IMR-90 (cell line): ENCODE measurements at regions of chr19 and their contacts with region 1.

Region 1: GRCh38 chr19:55624109-55625003 is at the start of gene ZNF784:
- DNase-seq: peak; percentile 90
- ATAC-seq: peak; percentile 93
- H3K4me3 ChIP-seq: peak within 1 kb of the TSS; percentile 83
- H3K27ac ChIP-seq: peak within 1 kb of the TSS; percentile 99
- H3K4me1 ChIP-seq: peaks cover 7% of the 10 kb centered on the region
- H3K27me3 ChIP-seq: no peaks in the 10 kb centered on the region
- CTCF ChIP-seq: no peak
- POLR2A ChIP-seq: peak; percentile 85
- RAD21 ChIP-seq: no peak
- total RNA-seq, gene ZNF784: 2.5 TPM in 2 replicates

Region 2: DNA sequence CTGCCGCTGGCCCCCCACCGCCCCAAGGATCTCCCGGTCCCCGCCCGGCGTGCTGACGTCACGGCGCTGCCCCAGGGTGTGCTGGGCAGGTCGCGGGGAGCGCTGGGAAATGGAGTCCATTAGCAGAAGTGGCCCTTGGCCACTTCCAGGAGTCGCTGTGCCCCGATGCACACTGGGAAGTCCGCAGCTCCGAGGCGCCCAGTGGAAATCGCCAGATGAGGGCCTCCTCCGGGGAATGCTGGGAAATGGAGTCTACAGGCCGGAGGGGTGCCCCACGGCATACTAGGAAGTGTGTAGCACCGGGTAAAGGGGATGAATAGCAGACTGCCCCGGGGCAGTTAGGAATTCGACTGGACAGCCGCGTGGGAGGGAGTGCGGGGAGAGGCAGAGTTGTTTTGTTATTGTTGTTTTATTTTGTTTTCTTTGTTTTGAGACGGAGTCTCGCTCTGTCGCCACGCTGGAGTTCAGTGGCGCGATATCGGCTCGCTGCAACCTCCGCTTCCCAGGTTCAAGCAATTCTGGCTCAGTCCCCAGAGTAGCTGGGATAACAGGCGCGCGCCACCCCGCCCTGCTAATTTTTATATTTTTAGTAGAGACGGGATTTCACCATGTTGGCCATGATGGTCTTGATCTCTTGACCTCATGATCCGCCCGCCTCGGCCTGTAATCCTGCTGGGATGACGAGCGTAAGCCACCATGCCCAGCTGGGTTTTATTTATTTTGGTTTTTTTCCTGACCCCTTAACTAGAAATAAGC is 506.5 kb before region 1 on chr19 and contains the start of gene PPP1R12C:
- CTCF ChIA-PET with region 1: no interaction called
- POLR2A ChIA-PET with region 1: no interaction called
- dilution Hi-C with region 1: no loop called
- in situ Hi-C with region 1: loop called (anchors 25 kb)
- intact Hi-C with region 1: no loop called
- DNase-seq: peak; percentile 99
- ATAC-seq: peak; percentile 84
- H3K4me3 ChIP-seq: peak within 1 kb of the TSS; percentile 69
- H3K27ac ChIP-seq: peak within 1 kb of the TSS; percentile 77
- H3K4me1 ChIP-seq: peaks cover 13% of the 10 kb centered on the region
- H3K27me3 ChIP-seq: 0 out of 2 replicates have a peak, but pooled peaks cover 3% of the 10 kb centered on the region
- CTCF ChIP-seq: no peak
- POLR2A ChIP-seq: no peak
- RAD21 ChIP-seq: no peak
- total RNA-seq, gene PPP1R12C: 21.1 and 21.5 TPM in 2 replicates

Region 3: GRCh38 chr19:55279770-55280643 is 344.3 kb before region 1 on chr19 and contains the start of gene HSPBP1:
- CTCF ChIA-PET with region 1: no interaction called
- POLR2A ChIA-PET with region 1: no interaction called
- dilution Hi-C with region 1: no loop called
- in situ Hi-C with region 1: loop called (anchors 25 kb)
- intact Hi-C with region 1: no loop called
- DNase-seq: peak; percentile 91
- ATAC-seq: peak; percentile 83
- H3K4me3 ChIP-seq: peak within 1 kb of the TSS; percentile 70
- H3K27ac ChIP-seq: peak within 1 kb of the TSS; percentile 62
- H3K4me1 ChIP-seq: peaks cover 15% of the 10 kb centered on the region
- H3K27me3 ChIP-seq: no peaks in the 10 kb centered on the region
- CTCF ChIP-seq: no peak
- POLR2A ChIP-seq: peak; percentile 80
- RAD21 ChIP-seq: no peak
- total RNA-seq, gene HSPBP1: 19.7 and 21.0 TPM in 2 replicates

Region 4: GRCh38 chr19:55494172-55494761 is 130.1 kb before region 1 on chr19:
- CTCF ChIA-PET with region 1: no interaction called
- POLR2A ChIA-PET with region 1: interaction called, 10 read pairs
- dilution Hi-C with region 1: no loop called
- in situ Hi-C with region 1: no loop called
- intact Hi-C with region 1: no loop called
- DNase-seq: peak; percentile 75
- ATAC-seq: peak; percentile 54
- H3K4me3 ChIP-seq: peak overlapping the region; percentile 18; the same call in 1 of the 2 replicates
- H3K27ac ChIP-seq: peak overlapping the region; percentile 65
- H3K4me1 ChIP-seq: peaks cover 16% of the 10 kb centered on the region
- H3K27me3 ChIP-seq: no peaks in the 10 kb centered on the region
- CTCF ChIP-seq: no peak
- POLR2A ChIP-seq: peak; percentile 51; the same call in 1 of the 2 replicates
- RAD21 ChIP-seq: no peak

Region 5: GRCh38 chr19:55605207-55605636 is 19.1 kb before region 1 on chr19:
- CTCF ChIA-PET with region 1: interaction called, 11 read pairs
- POLR2A ChIA-PET with region 1: no interaction called
- dilution Hi-C with region 1: no loop called
- in situ Hi-C with region 1: no loop called
- intact Hi-C with region 1: no loop called
- DNase-seq: peak; percentile 96
- ATAC-seq: peak; percentile 81
- H3K4me3 ChIP-seq: peak overlapping the region; percentile 76
- H3K27ac ChIP-seq: peak overlapping the region; percentile 91
- H3K4me1 ChIP-seq: peaks cover 9% of the 10 kb centered on the region
- H3K27me3 ChIP-seq: no peaks in the 10 kb centered on the region
- CTCF ChIP-seq: no peak
- POLR2A ChIP-seq: peak; percentile 48
- RAD21 ChIP-seq: no peak